Calu3 (cell line): ENCODE measurements at regions of chr15 and their contacts with region 1.

Region 1: DNA sequence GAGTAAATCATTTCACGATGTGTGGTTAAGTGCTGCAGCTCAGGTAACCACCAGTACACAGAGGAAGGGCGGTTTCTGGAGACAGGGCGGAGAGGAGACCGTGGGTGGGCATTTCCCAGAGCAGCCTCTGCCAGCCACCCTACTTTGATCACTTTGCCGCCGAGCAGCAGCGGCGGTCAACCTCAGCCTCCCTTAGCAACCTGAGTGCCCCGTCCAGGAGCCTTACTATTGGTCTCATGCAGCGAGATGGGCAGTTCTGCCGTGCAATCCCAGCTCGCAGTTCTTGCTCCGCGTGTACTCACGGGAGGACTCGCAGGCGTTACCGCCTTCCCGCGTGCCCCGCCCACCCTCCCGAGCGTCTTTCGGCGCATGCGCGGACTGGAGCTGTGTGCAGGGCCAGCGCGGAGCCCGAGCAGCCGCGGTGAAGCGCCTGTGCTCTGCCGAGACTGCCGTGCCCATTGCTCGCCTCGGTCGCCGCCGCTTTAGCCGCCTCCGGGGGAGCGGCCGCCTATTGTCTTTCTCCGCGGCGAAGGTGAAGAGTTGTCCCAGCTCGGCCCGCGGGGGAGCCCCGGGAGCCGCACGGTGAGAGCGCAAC is at the start of gene AKAP13:
- DNase-seq: peak; percentile 98
- H3K4me3 Mint-ChIP-seq: peak within 1 kb of the TSS; percentile 76
- H3K27ac Mint-ChIP-seq: peak within 1 kb of the TSS; percentile 45
- H3K4me1 Mint-ChIP-seq: peaks cover 40% of the 10 kb centered on the region
- H3K27me3 Mint-ChIP-seq: no peaks in the 10 kb centered on the region
- CTCF ChIP-seq: no peak
- total RNA-seq, gene AKAP13: 145 and 169 TPM in 2 replicates

Region 2: DNA sequence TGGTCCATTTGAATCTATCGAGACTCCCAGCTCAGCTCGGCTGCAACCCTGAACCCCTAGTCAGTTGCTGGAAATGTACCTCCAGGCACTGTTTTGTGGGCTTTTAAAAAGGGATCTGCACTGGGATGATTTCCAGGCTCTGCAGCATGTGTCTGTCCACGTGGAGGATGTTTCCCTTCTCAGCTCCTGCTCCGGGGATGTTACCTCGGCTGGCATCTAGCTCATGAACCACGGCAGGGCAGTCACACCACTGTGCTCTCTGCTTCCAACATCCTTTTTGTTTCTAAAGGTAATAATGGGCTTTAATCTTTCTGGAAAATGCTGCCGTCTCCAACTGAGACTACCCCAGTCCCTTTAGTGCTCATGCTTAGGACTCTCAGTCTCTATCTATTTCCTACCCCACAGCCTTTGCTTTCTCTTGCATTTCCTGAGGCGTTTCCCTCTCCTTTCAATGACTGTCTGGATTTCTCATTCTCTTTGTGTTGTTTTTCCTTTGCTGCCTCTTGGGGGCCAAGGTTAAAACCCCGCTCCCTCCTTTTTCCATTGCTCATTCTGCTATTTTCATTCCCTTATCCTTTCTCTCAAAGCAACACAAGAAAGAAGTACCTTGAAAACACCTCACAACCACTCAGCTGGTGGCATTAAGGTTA is 42.8 kb before region 1 on chr15:
- CTCF ChIA-PET with region 1: interaction called, 5 read pairs
- intact Hi-C with region 1: loop called (anchors 2 kb)
- DNase-seq: no peak
- H3K4me3 Mint-ChIP-seq: no peak overlapping the region
- H3K27ac Mint-ChIP-seq: no peak overlapping the region
- H3K4me1 Mint-ChIP-seq: peaks cover 12% of the 10 kb centered on the region
- H3K27me3 Mint-ChIP-seq: no peaks in the 10 kb centered on the region
- CTCF ChIP-seq: no peak

Region 3: DNA sequence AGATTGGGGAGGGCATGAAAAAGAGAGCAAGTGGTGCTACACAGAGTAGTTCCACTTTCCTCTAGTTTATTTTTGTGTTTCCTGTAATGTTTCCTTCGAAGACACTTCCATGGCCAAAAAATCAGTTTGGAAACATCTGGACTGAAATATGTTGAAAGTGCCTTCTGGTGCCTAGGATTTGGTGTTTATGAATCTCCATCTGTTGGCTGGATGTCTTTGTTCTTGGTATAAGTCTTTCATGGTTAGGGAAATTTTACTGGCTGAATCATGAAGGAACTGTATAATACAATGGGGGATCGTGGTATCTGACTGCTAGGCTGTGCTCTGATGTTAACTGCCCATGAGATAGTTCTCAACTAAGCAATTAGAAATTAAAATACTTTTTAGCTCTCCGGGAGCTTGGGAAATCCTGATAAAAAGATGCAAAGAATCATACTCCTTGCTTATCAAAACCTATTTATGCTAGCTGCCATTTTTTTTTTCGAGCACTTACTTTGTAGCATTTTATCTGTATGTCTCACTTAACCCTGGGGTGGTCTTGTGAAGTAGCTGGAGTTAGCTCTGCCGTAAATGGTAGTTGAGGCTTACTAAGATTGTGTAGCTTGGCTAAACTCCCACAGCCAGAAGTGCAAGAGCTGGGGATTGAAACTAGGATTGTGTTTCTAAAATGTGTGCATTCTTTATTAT is 22.0 kb after region 1 on chr15:
- CTCF ChIA-PET with region 1: interaction called, 6 read pairs
- intact Hi-C with region 1: loop called (anchors 2 kb)
- DNase-seq: no peak
- H3K4me3 Mint-ChIP-seq: no peak overlapping the region
- H3K27ac Mint-ChIP-seq: peak overlapping the region; percentile 38
- H3K4me1 Mint-ChIP-seq: peaks cover 35% of the 10 kb centered on the region
- H3K27me3 Mint-ChIP-seq: no peaks in the 10 kb centered on the region
- CTCF ChIP-seq: no peak

Region 4: DNA sequence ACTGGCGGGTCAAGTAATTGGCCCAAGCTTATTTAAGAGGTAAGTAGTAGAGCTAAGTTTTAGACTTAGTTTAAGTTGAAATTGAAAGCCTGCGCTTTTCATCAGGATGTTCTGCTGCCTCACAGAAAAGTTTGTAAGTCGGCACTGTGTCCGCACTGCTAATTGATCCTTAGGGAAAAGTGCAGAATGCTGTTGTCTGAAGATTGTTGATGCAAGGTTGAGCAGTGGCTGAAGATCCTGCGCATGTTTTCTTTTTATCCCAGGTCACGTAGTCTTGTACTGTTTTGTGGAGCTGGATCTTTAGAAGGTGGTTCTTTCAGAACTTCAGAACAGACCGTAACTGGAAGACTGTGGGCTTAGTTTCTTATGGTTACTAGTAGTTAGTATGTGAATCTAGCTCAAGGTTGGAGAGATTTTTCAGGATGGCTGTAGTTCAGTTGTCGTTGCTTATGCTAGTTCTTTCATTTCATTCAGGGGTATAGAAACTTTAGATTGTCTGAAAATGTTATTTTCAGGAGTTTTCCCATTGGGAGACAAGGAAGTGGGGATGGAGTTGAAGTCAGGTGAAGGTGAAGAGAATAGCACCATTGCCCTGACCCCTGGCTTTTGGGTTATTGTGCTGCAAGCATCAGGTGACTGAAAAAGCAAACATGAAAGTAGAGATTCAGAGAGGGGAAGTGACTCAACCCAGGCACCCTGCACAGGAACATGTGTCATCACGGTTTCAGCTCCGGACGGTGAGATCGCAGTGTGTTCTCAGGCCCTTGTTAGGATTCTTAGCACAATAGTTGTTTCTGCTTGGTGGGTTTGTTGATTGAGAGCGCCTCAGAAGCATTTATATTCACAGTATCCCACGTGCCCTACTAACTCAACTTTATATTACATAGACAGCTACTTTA is 32.9 kb after region 1 on chr15:
- CTCF ChIA-PET with region 1: interaction called, 10 read pairs
- intact Hi-C with region 1: no loop called
- DNase-seq: peak; percentile 79
- H3K4me3 Mint-ChIP-seq: peak overlapping the region; percentile 43
- H3K27ac Mint-ChIP-seq: peak overlapping the region; percentile 90
- H3K4me1 Mint-ChIP-seq: peaks cover 79% of the 10 kb centered on the region
- H3K27me3 Mint-ChIP-seq: no peaks in the 10 kb centered on the region
- CTCF ChIP-seq: no peak

Region 5: GRCh38 chr15:85479071-85479647 is 98.8 kb after region 1 on chr15:
- CTCF ChIA-PET with region 1: no interaction called
- intact Hi-C with region 1: no loop called
- DNase-seq: no peak
- H3K4me3 Mint-ChIP-seq: no peak overlapping the region
- H3K27ac Mint-ChIP-seq: no peak overlapping the region
- H3K4me1 Mint-ChIP-seq: peaks cover 59% of the 10 kb centered on the region
- H3K27me3 Mint-ChIP-seq: no peaks in the 10 kb centered on the region
- CTCF ChIP-seq: no peak